PC-9 (cell line): ENCODE measurements at regions of chr2 and their contacts with region 1.

Region 1: GRCh38 chr2:180268006-180268405 is 260.9 kb upstream of the CWC22 start:
- DNase-seq: no peak
- H3K4me3 ChIP-seq: no peak overlapping the region
- H3K27ac ChIP-seq: no peak overlapping the region
- H3K4me1 ChIP-seq: no peaks in the 10 kb centered on the region
- H3K27me3 ChIP-seq: no peaks in the 10 kb centered on the region
- CTCF ChIP-seq: no peak

Region 2: GRCh38 chr2:180255981-180256380 is 12.0 kb before region 1 on chr2:
- CTCF ChIA-PET with region 1: no interaction called
- POLR2A ChIA-PET with region 1: no interaction called
- intact Hi-C with region 1: loop called (anchors 1 kb)
- DNase-seq: no peak
- H3K4me3 ChIP-seq: no peak overlapping the region
- H3K27ac ChIP-seq: no peak overlapping the region
- H3K4me1 ChIP-seq: no peaks in the 10 kb centered on the region
- H3K27me3 ChIP-seq: no peaks in the 10 kb centered on the region
- CTCF ChIP-seq: no peak

Region 3: DNA sequence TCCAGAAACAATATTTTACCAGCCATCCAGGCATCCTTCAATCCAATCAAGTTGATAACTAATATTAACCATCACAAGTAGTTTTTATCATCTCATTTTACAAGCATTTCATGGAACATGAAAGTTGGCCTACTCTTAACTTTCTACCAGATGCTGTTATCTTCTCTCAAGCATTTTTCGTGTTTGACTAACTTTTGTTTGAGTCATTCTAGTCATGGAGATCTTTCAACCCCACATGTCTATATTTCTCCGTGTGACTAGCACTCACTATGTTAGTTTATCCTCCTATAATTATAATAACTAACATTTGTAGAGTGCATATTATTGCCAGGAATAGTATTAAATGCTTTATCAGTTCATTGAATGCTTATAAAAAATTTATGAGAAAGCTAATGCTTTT is 46.1 kb after region 1 on chr2:
- CTCF ChIA-PET with region 1: no interaction called
- POLR2A ChIA-PET with region 1: no interaction called
- intact Hi-C with region 1: no loop called
- DNase-seq: no peak
- H3K4me3 ChIP-seq: no peak overlapping the region
- H3K27ac ChIP-seq: no peak overlapping the region
- H3K4me1 ChIP-seq: no peaks in the 10 kb centered on the region
- H3K27me3 ChIP-seq: no peaks in the 10 kb centered on the region
- CTCF ChIP-seq: no peak

Region 4: GRCh38 chr2:180559771-180560170 is 291.8 kb after region 1 on chr2:
- CTCF ChIA-PET with region 1: no interaction called
- POLR2A ChIA-PET with region 1: no interaction called
- intact Hi-C with region 1: no loop called
- DNase-seq: no peak
- H3K4me3 ChIP-seq: no peak overlapping the region
- H3K27ac ChIP-seq: no peak overlapping the region
- H3K4me1 ChIP-seq: no peaks in the 10 kb centered on the region
- H3K27me3 ChIP-seq: no peaks in the 10 kb centered on the region
- CTCF ChIP-seq: no peak

Region 5: GRCh38 chr2:180720829-180721228 is 452.8 kb after region 1 on chr2:
- CTCF ChIA-PET with region 1: interaction called, 14 read pairs
- POLR2A ChIA-PET with region 1: no interaction called
- intact Hi-C with region 1: no loop called
- DNase-seq: no peak
- H3K4me3 ChIP-seq: no peak overlapping the region
- H3K27ac ChIP-seq: no peak overlapping the region
- H3K4me1 ChIP-seq: peaks cover 9% of the 10 kb centered on the region; the same call in 1 of the 2 replicates
- H3K27me3 ChIP-seq: no peaks in the 10 kb centered on the region
- CTCF ChIP-seq: no peak